AG04449 (cell line): ENCODE measurements at regions of chr10 and their contacts with region 1.

Region 1: DNA sequence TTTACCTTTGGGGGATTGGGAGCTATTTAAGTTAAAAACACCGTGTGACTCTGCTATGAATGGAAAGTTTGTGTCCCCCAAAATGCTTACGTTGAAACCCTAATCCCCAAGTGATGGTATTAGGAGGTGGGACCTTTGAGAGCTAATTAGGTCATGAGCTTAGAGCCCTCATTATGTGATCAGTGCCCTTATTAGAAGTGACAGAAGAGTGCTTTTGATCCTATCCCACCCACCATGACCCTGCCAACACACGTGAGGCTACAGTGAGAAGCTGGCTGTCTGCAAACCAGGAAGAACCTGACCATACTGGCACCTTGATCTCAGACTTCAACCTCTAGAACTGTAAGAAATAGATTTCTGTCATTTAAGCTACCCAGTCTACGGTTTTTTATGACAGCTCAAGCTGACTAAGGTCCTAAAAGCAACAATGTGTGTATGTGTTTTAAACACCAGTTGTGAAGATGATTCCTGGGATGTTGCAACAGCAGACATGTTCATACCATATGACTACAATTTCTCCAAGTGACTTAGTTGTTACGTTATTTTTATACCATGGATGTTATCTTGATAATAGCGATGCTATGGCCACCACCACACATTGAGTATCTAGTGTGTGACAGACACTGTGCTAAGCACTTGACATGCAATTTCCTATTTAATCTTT is 124.4 kb downstream of the PIP4K2A start:
- DNase-seq: no peak
- H3K4me3 ChIP-seq: no peak overlapping the region
- CTCF ChIP-seq: no peak

Region 2: GRCh38 chr10:22244001-22244400 is 346.0 kb before region 1 on chr10:
- CTCF ChIA-PET with region 1: no interaction called
- POLR2A ChIA-PET with region 1: no interaction called
- DNase-seq: no peak
- H3K4me3 ChIP-seq: no peak overlapping the region
- CTCF ChIP-seq: no peak

Region 3: GRCh38 chr10:22573820-22574569 is 16.0 kb before region 1 on chr10:
- CTCF ChIA-PET with region 1: interaction called, 34 read pairs
- POLR2A ChIA-PET with region 1: no interaction called
- DNase-seq: no peak
- H3K4me3 ChIP-seq: no peak overlapping the region
- CTCF ChIP-seq: peak; percentile 42